ENCODE measurements at regions of chr13 and their contacts with region 1.

Region 1: DNA sequence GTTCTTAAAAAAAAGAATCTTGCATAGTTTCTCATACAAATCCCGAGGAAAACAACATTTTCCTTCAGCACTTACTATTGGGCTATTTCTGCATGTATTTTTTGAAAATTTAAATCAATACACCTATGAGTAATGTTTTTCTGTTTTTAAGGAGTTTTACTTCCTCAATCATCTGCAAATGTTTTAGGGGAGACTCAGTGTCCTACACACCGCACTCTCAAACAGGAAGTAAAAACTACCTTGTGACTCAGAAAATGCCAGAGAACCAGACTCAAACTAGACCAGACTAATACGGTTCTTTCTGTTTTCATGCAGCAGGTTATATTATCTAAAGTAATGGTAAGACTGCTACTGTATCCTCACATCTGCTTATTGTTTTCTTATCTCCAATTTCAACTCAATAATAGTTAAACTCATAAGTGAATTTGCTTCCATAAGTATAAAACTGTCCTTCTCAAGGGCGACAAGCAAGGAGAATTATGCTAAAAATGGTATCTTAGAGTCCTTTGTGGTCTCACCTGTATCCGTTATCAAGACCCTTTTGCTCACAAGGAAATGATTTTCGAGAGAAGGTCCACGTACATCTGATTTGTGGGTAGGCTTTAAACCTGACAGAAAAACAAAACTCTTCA is 52.5 kb downstream of the FLT3 start:
- DNase-seq: no peak
- ATAC-seq: peak; percentile 92
- H3K4me3 Mint-ChIP-seq: peak overlapping the region; percentile 72
- H3K27ac Mint-ChIP-seq: peak overlapping the region; percentile 93
- H3K4me1 Mint-ChIP-seq: peaks cover 69% of the 10 kb centered on the region
- H3K27me3 Mint-ChIP-seq: no peaks in the 10 kb centered on the region
- CTCF ChIP-seq: no peak

Region 2: DNA sequence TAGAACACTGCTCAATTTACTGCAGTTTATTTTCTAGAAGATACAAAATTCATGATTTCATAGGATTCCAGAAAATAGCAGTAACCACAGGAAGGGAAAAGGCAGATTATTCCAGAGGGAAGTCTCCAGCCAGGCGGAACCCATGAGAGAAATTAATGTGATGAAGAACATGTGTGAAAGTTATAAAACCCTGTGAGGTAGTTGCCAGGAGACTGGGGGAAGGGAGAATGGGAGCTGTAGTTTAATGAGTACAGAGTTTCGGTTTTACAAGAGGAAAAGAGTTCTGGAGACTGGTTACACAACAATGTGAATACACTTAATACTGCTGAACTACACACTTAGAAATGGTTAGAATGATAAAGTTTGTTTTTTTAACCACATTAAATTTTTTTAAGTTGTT is 142.2 kb before region 1 on chr13:
- CTCF ChIA-PET with region 1: no interaction called
- POLR2A ChIA-PET with region 1: no interaction called
- intact Hi-C with region 1: no loop called
- DNase-seq: no peak
- ATAC-seq: no peak
- H3K4me3 Mint-ChIP-seq: no peak overlapping the region
- H3K27ac Mint-ChIP-seq: no peak overlapping the region
- H3K4me1 Mint-ChIP-seq: no peaks in the 10 kb centered on the region
- H3K27me3 Mint-ChIP-seq: peaks cover 69% of the 10 kb centered on the region
- CTCF ChIP-seq: no peak

Region 3: GRCh38 chr13:27953676-27954405 is 94.0 kb before region 1 on chr13:
- CTCF ChIA-PET with region 1: no interaction called
- POLR2A ChIA-PET with region 1: no interaction called
- intact Hi-C with region 1: no loop called
- DNase-seq: peak; percentile 73
- ATAC-seq: peak; percentile 92
- H3K4me3 Mint-ChIP-seq: peak overlapping the region; percentile 77
- H3K27ac Mint-ChIP-seq: peak overlapping the region; percentile 30
- H3K4me1 Mint-ChIP-seq: peaks cover 15% of the 10 kb centered on the region
- H3K27me3 Mint-ChIP-seq: peaks cover 61% of the 10 kb centered on the region
- CTCF ChIP-seq: no peak

Region 4: DNA sequence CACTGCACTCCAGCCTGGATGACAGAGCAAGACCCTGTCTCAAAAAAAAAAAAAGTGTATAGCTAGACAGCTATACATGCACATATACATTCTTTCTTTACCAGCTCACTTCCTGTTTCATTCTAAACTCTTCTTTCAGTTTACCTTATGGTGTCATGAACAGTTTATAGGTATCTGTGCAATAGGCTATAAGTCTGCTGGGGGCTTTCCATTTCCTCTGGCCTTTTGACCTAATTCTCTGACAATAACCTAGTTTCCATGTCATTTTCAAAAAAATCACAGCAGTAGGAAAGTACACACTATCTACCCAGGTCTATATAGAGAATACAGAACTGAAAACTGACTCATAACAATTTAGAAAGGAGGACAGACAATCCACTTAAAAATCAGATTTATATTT is 35.0 kb before region 1 on chr13:
- CTCF ChIA-PET with region 1: no interaction called
- POLR2A ChIA-PET with region 1: no interaction called
- intact Hi-C with region 1: loop called (anchors 5 kb)
- DNase-seq: no peak
- ATAC-seq: peak; percentile 80
- H3K4me3 Mint-ChIP-seq: no peak overlapping the region
- H3K27ac Mint-ChIP-seq: peak overlapping the region; percentile 3
- H3K4me1 Mint-ChIP-seq: peaks cover 15% of the 10 kb centered on the region
- H3K27me3 Mint-ChIP-seq: no peaks in the 10 kb centered on the region
- CTCF ChIP-seq: no peak

Region 5: GRCh38 chr13:28037399-28037798 is 10.5 kb before region 1 on chr13:
- CTCF ChIA-PET with region 1: no interaction called
- POLR2A ChIA-PET with region 1: no interaction called
- intact Hi-C with region 1: loop called (anchors 1 kb)
- DNase-seq: no peak
- ATAC-seq: peak; percentile 81
- H3K4me3 Mint-ChIP-seq: no peak overlapping the region
- H3K27ac Mint-ChIP-seq: no peak overlapping the region
- H3K4me1 Mint-ChIP-seq: peaks cover 49% of the 10 kb centered on the region
- H3K27me3 Mint-ChIP-seq: no peaks in the 10 kb centered on the region
- CTCF ChIP-seq: no peak

Region 6: DNA sequence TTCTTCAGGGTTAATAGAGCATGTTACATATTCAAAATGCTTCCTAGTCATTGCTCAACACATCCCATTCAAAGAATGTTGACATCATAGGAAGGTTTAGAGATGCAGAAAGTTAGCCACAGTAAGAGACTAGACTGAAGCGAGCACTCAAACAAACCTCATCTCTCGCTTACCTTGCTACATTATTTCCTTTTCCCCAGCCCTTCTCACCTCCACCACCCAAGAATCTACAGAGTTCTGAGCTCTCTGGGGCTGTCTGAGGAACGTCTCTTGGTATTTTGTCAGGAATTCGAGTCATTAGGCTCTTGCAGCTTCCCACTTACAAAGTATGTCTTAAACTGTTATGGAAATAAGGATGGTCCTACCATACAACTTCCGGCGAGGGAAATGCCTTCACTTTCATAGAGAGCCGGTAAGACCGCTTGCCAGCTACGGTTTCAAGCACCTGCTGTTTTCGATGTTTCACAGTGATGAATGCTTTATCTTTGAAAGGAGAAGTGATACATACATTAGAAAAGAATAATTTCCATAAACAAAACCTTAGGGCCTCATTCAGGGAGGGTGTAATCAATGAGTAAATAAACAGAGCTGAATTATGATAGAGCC is 381.9 kb after region 1 on chr13:
- CTCF ChIA-PET with region 1: no interaction called
- POLR2A ChIA-PET with region 1: no interaction called
- intact Hi-C with region 1: loop called (anchors 5 kb)
- DNase-seq: peak; percentile 19
- ATAC-seq: peak; percentile 92
- H3K4me3 Mint-ChIP-seq: peak overlapping the region; percentile 86
- H3K27ac Mint-ChIP-seq: peak overlapping the region; percentile 97
- H3K4me1 Mint-ChIP-seq: peaks cover 36% of the 10 kb centered on the region
- H3K27me3 Mint-ChIP-seq: peaks cover under 1% of the 10 kb centered on the region
- CTCF ChIP-seq: no peak

Region 7: DNA sequence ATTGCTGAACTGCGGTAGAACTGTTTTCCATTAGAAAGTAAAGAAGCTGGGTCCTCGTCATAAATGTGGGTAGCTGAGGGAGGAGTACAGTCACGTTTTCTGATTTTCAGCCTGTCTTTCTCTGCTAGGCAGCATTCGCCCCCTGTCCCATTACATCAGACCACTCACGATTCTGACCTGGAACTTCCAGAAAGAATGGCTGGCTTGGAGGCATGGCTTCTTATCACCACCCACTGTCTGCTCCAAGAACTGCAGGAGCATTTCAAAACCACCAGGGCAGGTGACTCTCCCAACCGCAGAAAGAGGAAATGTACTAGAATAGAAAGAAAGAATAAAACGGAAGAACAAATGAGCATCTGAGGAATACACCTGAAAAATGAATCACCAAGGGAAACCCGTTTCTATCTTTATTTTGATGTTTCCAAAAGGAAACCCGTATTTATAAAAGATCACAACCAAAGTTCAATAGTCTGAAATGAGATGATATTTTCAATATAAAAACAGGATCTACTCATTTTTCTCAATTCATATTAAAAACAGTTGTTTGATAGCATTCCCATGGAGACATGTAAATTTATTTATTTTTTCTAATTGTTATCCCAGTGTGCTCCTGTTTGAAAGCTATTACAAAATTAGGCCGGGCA is 588.9 kb after region 1 on chr13:
- CTCF ChIA-PET with region 1: no interaction called
- POLR2A ChIA-PET with region 1: interaction called, 11 read pairs
- intact Hi-C with region 1: no loop called
- DNase-seq: no peak
- ATAC-seq: peak; percentile 74
- H3K4me3 Mint-ChIP-seq: peak overlapping the region; percentile 66
- H3K27ac Mint-ChIP-seq: peak overlapping the region; percentile 74
- H3K4me1 Mint-ChIP-seq: peaks cover 36% of the 10 kb centered on the region
- H3K27me3 Mint-ChIP-seq: no peaks in the 10 kb centered on the region
- CTCF ChIP-seq: no peak

Region 8: GRCh38 chr13:28718543-28719226 is 670.8 kb after region 1 on chr13 and contains the start of gene SLC46A3:
- CTCF ChIA-PET with region 1: no interaction called
- POLR2A ChIA-PET with region 1: no interaction called
- intact Hi-C with region 1: loop called (anchors 10 kb)
- DNase-seq: peak; percentile 95
- ATAC-seq: peak; percentile 98
- H3K4me3 Mint-ChIP-seq: peak within 1 kb of the TSS; percentile 92
- H3K27ac Mint-ChIP-seq: peak within 1 kb of the TSS; percentile 92
- H3K4me1 Mint-ChIP-seq: peaks cover 23% of the 10 kb centered on the region
- H3K27me3 Mint-ChIP-seq: no peaks in the 10 kb centered on the region
- CTCF ChIP-seq: no peak
- total RNA-seq, gene SLC46A3: 8.6 and 11.8 TPM in 2 replicates